ENCODE measurements at regions of chr18 and their contacts with region 1.

Region 1: GRCh38 chr18:23131693-23132319 is 3.5 kb upstream of the CABLES1 start:
- DNase-seq: peak in 1 of 2 donors; percentile 72
- H3K4me3 ChIP-seq: no peak overlapping the region
- CTCF ChIP-seq: peak in 1 of 3 donors; percentile 78
- POLR2A ChIP-seq: no peak

Region 2: DNA sequence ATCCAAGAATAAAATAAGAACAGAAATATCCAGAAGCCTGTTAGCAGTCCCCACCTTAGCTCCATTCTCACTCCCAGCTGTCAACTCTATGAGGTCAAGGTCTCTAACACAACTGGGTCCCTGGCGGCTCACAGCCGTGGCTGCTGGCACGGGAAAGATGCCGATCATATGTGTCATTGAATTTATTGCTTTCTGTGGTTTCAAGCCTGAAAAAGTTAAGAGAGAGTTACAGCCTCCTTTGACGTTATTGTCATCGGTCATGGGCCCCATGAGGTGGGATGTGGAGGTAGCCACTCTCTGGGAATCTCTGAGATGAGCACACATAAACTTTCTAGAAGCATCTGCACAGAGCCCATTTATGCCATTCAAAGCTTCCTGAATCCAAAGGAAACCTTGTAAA is 25.2 kb before region 1 on chr18:
- intact Hi-C with region 1: no loop called
- DNase-seq: no peak
- H3K4me3 ChIP-seq: no peak overlapping the region
- CTCF ChIP-seq: no peak
- POLR2A ChIP-seq: no peak

Region 3: GRCh38 chr18:23178661-23179081 is 46.9 kb after region 1 on chr18:
- intact Hi-C with region 1: no loop called
- DNase-seq: no peak
- H3K4me3 ChIP-seq: no peak overlapping the region
- CTCF ChIP-seq: no peak
- POLR2A ChIP-seq: no peak

Region 4: GRCh38 chr18:23231340-23232021 is 99.7 kb after region 1 on chr18:
- intact Hi-C with region 1: loop called (anchors 10 kb)
- DNase-seq: peak; percentile 92 to 96
- H3K4me3 ChIP-seq: no peak overlapping the region
- CTCF ChIP-seq: no peak
- POLR2A ChIP-seq: no peak

Region 5: GRCh38 chr18:23377669-23378301 is 246.0 kb after region 1 on chr18:
- intact Hi-C with region 1: loop called (anchors 5 kb)
- DNase-seq: no peak
- H3K4me3 ChIP-seq: no peak overlapping the region
- CTCF ChIP-seq: no peak
- POLR2A ChIP-seq: no peak

Measured in lower leg skin (tissue), 4 donors.